ENCODE measurements at regions of chr19 and their contacts with region 1.

Region 1: DNA sequence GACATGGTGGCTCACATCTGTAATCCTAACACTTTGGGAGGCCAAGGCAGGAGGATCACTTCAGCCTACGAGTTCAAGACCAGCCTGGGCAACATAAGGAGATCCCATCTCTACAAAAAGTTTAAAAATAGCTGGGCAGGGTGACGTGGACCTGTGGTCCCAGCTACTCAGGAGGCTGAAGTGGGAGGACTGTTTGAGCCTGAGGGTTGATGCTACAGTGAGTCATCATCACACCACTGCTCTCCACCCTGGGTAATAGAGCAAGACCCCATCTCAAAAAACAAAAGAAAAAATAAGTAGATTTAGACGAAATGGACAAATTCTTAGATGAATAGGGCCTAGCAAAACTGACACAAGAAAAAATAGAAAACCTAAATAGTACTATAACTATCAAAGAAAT is 10.4 kb upstream of the GNG8 start:
- DNase-seq: no peak
- ATAC-seq: no peak
- H3K4me3 ChIP-seq: no peak overlapping the region
- H3K4me3 Mint-ChIP-seq: no peak overlapping the region
- H3K27ac ChIP-seq: no peak overlapping the region
- H3K27ac Mint-ChIP-seq: no peak overlapping the region
- H3K4me1 ChIP-seq: peaks cover 2 to 10% of the 10 kb centered on the region in 2 experiments
- H3K4me1 Mint-ChIP-seq: peaks cover 6 to 13% (median 10%) of the 10 kb centered on the region in 3 donors
- H3K27me3 ChIP-seq: peaks cover 11 to 51% of the 10 kb centered on the region in 2 experiments
- H3K27me3 Mint-ChIP-seq: peaks cover 17 to 39% of the 10 kb centered on the region in 2 donors

Region 2: GRCh38 chr19:46634045-46634655 is 12.3 kb before region 1 on chr19:
- CTCF ChIA-PET with region 1: no interaction called
- POLR2A ChIA-PET with region 1: no interaction called
- DNase-seq: peak; percentile 90 to 98 (median 94)
- ATAC-seq: peak; percentile 72 to 81 (median 78)
- H3K4me3 ChIP-seq: peak overlapping the region; percentile 42 to 49
- H3K4me3 Mint-ChIP-seq: peak overlapping the region in 2 of 3 donors; percentile 72 to 74
- H3K27ac ChIP-seq: peak overlapping the region; percentile 79
- H3K27ac Mint-ChIP-seq: peak overlapping the region in 1 of 2 donors; percentile 65
- H3K4me1 ChIP-seq: peaks cover 26 to 50% of the 10 kb centered on the region in 2 experiments
- H3K4me1 Mint-ChIP-seq: peaks cover 14 to 23% (median 20%) of the 10 kb centered on the region in 3 donors
- H3K27me3 ChIP-seq: peaks cover 0 to 50% of the 10 kb centered on the region in 2 experiments
- H3K27me3 Mint-ChIP-seq: peaks cover 0 to 4% of the 10 kb centered on the region in 2 donors

Region 3: GRCh38 chr19:47003611-47004465 is 357.4 kb after region 1 on chr19:
- CTCF ChIA-PET with region 1: no interaction called
- POLR2A ChIA-PET with region 1: interaction called in 1 of 2 experiments, 14 read pairs
- DNase-seq: no peak
- ATAC-seq: no peak
- H3K4me3 ChIP-seq: no peak overlapping the region
- H3K4me3 Mint-ChIP-seq: no peak overlapping the region
- H3K27ac ChIP-seq: no peak overlapping the region
- H3K27ac Mint-ChIP-seq: no peak overlapping the region
- H3K4me1 ChIP-seq: peaks cover 0 to 13% of the 10 kb centered on the region in 2 experiments
- H3K4me1 Mint-ChIP-seq: peaks cover 7 to 18% (median 14%) of the 10 kb centered on the region in 3 donors
- H3K27me3 ChIP-seq: peaks cover 0 to 19% of the 10 kb centered on the region in 2 experiments
- H3K27me3 Mint-ChIP-seq: peaks cover 4 to 11% of the 10 kb centered on the region in 2 donors